ENCODE measurements at regions of chr19 and their contacts with region 1.

Region 1: DNA sequence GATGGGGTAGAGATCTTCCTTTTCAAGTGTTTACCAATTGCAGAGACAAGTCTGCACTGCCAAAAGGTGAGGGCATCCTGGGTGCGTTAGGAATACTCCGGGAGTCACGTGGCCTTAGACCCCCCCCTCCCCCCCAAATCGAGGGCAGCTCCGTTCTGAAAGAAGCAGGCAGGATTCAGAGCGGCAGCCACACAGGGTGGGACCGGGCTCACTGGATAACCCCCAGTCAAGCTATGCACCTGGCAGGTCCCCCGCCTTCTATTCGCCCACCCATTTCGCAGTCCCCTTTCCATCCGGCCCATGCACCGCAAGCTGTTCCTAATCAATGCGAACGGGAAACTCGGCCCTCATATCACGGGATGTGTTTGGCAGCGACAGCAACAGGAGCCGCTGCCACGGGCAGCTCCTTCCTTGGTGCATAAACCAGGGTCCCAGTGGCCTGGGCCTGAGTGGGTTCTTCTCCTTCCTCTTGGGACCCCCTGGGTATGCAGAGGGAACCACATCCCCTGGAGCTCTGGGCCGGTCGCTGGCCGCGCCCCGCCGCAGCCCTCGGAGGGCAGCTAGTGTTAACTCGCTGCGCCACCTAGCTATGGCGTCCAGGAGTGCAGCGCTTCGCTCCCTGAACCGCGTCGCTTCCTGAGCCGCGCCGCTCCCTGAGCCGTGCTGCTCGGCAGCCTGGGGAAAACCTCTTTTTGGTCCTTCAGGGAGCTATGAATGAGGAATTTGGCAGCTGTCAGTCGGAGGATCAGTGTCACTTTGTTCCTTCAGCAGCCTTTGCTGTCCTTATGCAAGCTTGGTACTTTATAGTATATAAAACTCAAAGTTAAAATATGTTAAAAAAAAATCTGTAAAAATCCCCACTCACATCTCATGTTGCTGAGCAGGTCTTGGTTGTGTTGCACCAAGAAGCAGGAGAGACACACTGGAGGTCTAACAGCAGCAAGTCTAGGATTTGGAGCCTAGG is 41.4 kb downstream of the LYL1 start:
- DNase-seq: peak; percentile 78 to 97
- H3K4me3 ChIP-seq: no peak overlapping the region
- CTCF ChIP-seq: peak in 2 of 3 donors; percentile 46 to 86
- POLR2A ChIP-seq: no peak

Region 2: DNA sequence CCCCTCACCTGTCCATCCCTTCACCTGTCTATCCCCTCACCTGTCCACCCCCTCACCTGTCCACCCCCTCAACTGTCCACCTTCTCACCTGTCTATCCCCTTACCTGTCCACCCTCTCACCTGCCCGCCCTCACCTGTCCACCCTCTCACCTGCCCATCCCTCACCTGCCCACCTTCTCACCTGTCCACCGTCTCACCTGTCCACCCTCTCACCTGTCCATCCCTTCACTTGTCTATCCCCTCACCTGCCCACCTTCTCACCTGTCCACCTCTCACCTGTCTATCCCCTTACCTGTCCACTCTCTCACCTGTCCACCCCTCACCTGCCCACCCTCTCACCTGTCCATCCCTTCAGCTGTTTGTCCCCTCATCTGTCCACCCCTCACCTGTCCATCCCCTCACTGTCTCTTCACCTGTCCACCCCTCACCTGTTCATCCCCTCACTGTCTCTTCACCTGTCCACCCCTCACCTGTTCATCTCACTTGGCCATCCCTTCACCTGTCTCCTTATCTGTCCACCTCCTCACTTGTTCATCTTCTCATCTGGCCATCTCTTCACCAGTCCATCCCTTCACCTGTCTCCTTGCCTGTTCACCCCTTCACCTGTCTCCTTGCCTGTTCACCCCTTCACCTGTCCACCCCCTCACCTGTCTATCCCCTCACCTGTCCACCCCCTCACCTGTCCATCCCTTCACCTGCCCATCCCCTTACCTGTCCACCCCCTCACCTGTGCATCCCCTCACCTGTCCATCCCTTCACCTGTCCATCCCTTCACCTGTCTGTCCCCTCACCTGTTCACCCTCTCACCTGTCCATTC is 1851.2 kb before region 1 on chr19:
- intact Hi-C with region 1: loop called (anchors 5 kb)
- DNase-seq: no peak
- H3K4me3 ChIP-seq: no peak overlapping the region
- CTCF ChIP-seq: no peak
- POLR2A ChIP-seq: no peak

Region 3: DNA sequence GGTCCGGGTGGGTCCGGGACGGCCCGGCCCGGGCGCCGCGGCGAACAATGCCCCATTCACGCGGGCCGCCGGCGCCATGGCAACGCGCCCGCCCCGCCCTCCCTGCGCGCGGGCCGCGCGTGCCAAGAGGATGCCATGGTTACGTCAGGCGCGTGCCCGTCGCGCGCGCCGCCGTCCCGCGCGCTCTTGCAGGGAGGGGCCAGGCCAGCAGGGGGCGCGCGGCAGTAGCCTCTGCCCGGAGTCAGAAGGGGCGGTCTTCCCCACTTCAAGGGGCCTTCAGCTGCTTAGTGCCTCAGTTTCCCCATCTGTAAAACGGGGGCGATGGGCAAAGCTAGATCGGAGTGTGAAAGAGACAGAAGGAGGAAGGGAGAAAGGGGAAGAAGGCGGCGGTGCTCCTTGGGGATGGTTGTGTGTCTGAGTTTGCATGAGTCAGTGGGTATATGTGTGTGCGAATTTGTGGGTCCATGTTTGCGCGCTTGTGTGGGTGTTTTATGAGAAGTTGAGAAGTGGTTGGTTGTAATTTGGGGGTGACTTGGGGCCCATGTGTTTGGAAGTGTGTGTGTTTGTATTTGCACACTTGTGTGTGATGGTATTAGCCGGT is 77.6 kb before region 1 on chr19:
- intact Hi-C with region 1: loop called (anchors 10 kb)
- DNase-seq: no peak
- H3K4me3 ChIP-seq: no peak overlapping the region
- CTCF ChIP-seq: peak in 1 of 3 donors; percentile 70
- POLR2A ChIP-seq: no peak

Region 4: GRCh38 chr19:13986348-13986904 is 925.2 kb after region 1 on chr19:
- intact Hi-C with region 1: no loop called
- DNase-seq: peak; percentile 86 to 97
- H3K4me3 ChIP-seq: no peak overlapping the region
- CTCF ChIP-seq: no peak
- POLR2A ChIP-seq: no peak